ENCODE measurements at regions of chr18 and their contacts with region 1.

Region 1: GRCh38 chr18:3447895-3448837 is 1.8 kb upstream of the TGIF1 start:
- DNase-seq: peak; percentile 92
- ATAC-seq: peak; percentile 81
- H3K4me3 ChIP-seq: peak overlapping the region; percentile 78 to 85
- H3K27ac ChIP-seq: peak overlapping the region; percentile 90
- H3K4me1 ChIP-seq: peaks cover 25 to 45% of the 10 kb centered on the region in 2 experiments
- H3K27me3 ChIP-seq: no peaks in the 10 kb centered on the region
- CTCF ChIP-seq: no peak
- POLR2A ChIP-seq: no peak
- RAD21 ChIP-seq: no peak

Region 2: GRCh38 chr18:3261371-3262246 is 186.6 kb before region 1 on chr18 and contains the start of gene MYL12B:
- CTCF ChIA-PET with region 1: no interaction called
- POLR2A ChIA-PET with region 1: interaction called, 4 read pairs
- RAD21 ChIA-PET with region 1: no interaction called
- intact Hi-C with region 1: loop called (anchors 5 kb)
- DNase-seq: peak; percentile 62
- ATAC-seq: peak; percentile 82
- H3K4me3 ChIP-seq: peak within 1 kb of the TSS; percentile 79 to 90
- H3K27ac ChIP-seq: peak within 1 kb of the TSS; percentile 89
- H3K4me1 ChIP-seq: peaks cover 36 to 45% of the 10 kb centered on the region in 2 experiments
- H3K27me3 ChIP-seq: no peaks in the 10 kb centered on the region
- CTCF ChIP-seq: no peak
- POLR2A ChIP-seq: peak; percentile 25
- RAD21 ChIP-seq: 0 out of 2 replicates have a peak, but pooled peaks have one; percentile 5
- total RNA-seq, gene MYL12B: 403 TPM

Region 3: DNA sequence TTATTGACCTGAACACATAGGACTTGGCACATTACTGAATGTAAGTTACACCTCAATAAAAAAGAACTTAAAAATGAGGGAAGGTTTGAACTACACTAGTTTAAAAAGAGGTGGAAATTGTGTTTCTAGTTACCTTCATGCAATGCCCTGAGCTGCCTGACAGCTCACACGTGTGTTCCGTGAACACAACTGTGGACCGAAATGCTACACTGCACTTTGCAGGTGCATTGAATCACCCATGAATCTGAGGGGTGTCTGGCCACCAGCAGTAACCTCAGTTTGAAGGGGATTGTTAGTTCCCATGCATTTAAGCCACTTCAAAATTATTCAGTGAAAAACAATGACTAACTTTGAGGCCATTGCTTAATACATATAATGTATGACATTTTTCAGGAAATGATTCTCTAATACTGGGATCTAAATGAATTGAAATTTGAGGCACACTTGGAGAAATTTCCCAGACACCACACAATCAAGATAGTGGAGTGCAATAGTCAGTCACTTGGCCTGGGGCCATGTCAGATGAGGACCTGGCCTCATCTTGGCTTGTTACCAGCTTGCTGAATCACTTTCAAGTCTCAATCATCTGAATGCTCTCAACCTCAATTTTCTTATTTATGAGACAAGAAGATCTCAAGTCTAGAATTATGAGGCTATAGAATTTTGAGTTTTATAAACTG is 126.9 kb before region 1 on chr18:
- CTCF ChIA-PET with region 1: no interaction called
- POLR2A ChIA-PET with region 1: no interaction called
- RAD21 ChIA-PET with region 1: no interaction called
- intact Hi-C with region 1: loop called (anchors 10 kb)
- DNase-seq: no peak
- ATAC-seq: no peak
- H3K4me3 ChIP-seq: no peak overlapping the region
- H3K27ac ChIP-seq: no peak overlapping the region
- H3K4me1 ChIP-seq: peaks cover 5 to 29% of the 10 kb centered on the region in 2 experiments; a peak in 3 of 4 replicates
- H3K27me3 ChIP-seq: no peaks in the 10 kb centered on the region
- CTCF ChIP-seq: no peak
- POLR2A ChIP-seq: no peak
- RAD21 ChIP-seq: no peak

Region 4: DNA sequence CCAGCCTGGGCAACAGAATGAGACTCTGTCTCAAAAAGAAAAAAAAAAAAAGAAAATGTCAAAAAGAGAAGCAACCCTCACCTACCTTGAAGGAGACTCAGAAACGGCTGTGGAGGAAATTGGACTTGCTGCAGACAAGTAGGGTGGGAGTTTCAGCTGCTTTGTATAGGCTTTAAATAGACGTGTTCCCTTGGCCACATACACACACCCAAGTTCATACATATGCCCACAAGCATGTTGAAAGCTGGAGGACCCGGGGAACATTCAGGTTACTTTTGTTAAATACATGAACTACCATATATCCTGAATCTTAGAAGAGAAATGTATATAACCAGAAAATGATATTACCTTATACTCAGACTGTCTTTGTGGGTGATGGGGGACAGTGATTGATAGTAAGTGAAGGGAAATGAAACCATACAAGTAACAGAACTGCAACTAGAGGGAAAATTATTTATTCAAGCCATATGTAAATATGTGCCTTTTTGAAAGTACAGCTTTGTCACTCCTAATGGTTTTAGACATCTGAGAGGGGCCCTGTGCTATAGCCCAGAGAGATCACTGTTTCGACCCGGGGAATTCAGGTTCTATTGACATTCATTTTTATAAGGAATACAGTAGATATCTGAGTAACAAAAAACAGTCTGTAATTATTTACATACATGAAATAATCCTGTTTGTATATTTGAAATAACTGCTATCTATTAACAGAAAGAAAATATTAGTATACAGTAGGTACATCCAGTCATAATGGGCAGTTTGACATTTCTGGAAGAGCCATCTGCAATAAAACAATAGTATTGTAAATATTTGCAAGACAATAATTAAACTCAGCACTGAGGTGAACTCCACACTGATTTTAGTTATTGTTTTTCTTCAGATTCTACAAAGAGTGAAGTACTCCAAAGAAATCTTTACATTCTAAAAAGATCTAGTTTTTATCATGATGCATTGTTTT is 46.2 kb before region 1 on chr18:
- CTCF ChIA-PET with region 1: no interaction called
- POLR2A ChIA-PET with region 1: no interaction called
- RAD21 ChIA-PET with region 1: no interaction called
- intact Hi-C with region 1: no loop called
- DNase-seq: no peak
- ATAC-seq: no peak
- H3K4me3 ChIP-seq: no peak overlapping the region
- H3K27ac ChIP-seq: no peak overlapping the region
- H3K4me1 ChIP-seq: peaks cover 4 to 16% of the 10 kb centered on the region in 2 experiments; a peak in 2 of 4 replicates
- H3K27me3 ChIP-seq: no peaks in the 10 kb centered on the region
- CTCF ChIP-seq: no peak
- POLR2A ChIP-seq: no peak
- RAD21 ChIP-seq: no peak

Region 5: GRCh38 chr18:3593904-3594661 is 145.9 kb after region 1 on chr18:
- CTCF ChIA-PET with region 1: interaction called, 6 read pairs
- POLR2A ChIA-PET with region 1: interaction called, 22 read pairs
- RAD21 ChIA-PET with region 1: interaction called in 1 of 2 experiments, 4 read pairs
- intact Hi-C with region 1: no loop called
- DNase-seq: peak; percentile 95
- ATAC-seq: peak; percentile 70
- H3K4me3 ChIP-seq: peak overlapping the region; percentile 60 to 81
- H3K27ac ChIP-seq: peak overlapping the region; percentile 100
- H3K4me1 ChIP-seq: peaks cover 86 to 95% of the 10 kb centered on the region in 2 experiments
- H3K27me3 ChIP-seq: no peaks in the 10 kb centered on the region
- CTCF ChIP-seq: peak in 2 of 3 experiments; percentile 73 to 86; a peak in 4 of 6 replicates
- POLR2A ChIP-seq: no peak
- RAD21 ChIP-seq: no peak

Region 6: DNA sequence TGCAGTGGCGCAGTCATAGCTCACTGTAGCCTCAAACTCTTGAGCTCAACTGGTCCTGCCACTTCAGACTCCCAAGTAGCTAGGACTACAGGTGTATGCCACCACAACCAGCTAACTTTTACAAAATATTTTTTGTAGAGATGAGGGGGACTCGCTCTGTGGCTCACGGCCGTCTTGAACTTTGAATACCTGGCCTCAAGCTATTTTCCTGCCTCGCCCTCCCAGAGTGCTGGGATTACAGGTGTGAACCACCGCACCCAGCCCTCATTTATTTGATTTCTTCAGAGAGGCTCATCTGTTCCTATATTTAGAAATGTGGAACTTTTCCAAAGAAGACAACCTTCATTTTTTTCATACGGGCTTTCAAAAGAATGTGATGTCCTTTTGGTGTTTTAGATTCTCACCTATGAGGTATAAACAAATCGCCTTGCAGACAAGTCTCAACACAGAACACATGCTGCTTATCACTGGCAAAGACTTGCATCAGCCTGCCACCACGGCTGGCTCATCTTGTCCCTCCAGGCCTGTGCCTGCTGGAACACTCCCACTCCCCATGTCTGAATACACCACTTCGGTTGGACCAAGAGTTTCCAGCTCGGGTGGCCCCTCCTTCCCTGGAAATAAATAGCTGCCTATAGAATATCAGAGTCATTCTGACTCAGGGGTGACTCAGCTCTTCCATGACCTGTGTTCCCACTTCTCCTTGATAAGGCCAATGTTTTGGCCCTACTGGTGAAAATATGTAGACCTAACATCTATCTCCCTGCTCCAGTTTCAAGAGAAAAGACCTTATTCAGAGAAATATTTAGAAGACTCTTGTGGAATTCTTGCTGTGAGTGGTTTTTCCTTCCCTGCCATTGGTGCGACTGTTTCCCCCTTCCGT is 204.5 kb after region 1 on chr18:
- CTCF ChIA-PET with region 1: no interaction called
- POLR2A ChIA-PET with region 1: interaction called, 3 read pairs
- RAD21 ChIA-PET with region 1: no interaction called
- intact Hi-C with region 1: loop called (anchors 5 kb)
- DNase-seq: peak; percentile 98
- ATAC-seq: peak; percentile 72
- H3K4me3 ChIP-seq: peak overlapping the region; percentile 39 to 52
- H3K27ac ChIP-seq: peak overlapping the region; percentile 96
- H3K4me1 ChIP-seq: peaks cover 92 to 93% of the 10 kb centered on the region in 2 experiments
- H3K27me3 ChIP-seq: no peaks in the 10 kb centered on the region
- CTCF ChIP-seq: peak in 2 of 3 experiments; percentile 7 to 13; a peak in 1 of 6 replicates
- POLR2A ChIP-seq: no peak
- RAD21 ChIP-seq: no peak

Measured in HCT116 (cell line).